Left lung (tissue), 14 donors: ENCODE measurements at regions of chr17 and their contacts with region 1.

Region 1: GRCh38 chr17:7687908-7688807 is at the start of gene WRAP53:
- DNase-seq: peak; percentile 96 to 99 (median 97)
- ATAC-seq: peak; percentile 92
- H3K4me3 ChIP-seq: peak within 1 kb of the TSS; percentile 94 to 96
- H3K27ac ChIP-seq: peak within 1 kb of the TSS; percentile 97 to 98
- H3K4me1 ChIP-seq: peaks cover 19 to 32% of the 10 kb centered on the region in 2 donors
- H3K27me3 ChIP-seq: no peaks in the 10 kb centered on the region
- CTCF ChIP-seq: peak; percentile 97 to 99
- polyA plus RNA-seq, gene WRAP53: 13.3 to 16.0 (median 14.0) TPM

Region 2: DNA sequence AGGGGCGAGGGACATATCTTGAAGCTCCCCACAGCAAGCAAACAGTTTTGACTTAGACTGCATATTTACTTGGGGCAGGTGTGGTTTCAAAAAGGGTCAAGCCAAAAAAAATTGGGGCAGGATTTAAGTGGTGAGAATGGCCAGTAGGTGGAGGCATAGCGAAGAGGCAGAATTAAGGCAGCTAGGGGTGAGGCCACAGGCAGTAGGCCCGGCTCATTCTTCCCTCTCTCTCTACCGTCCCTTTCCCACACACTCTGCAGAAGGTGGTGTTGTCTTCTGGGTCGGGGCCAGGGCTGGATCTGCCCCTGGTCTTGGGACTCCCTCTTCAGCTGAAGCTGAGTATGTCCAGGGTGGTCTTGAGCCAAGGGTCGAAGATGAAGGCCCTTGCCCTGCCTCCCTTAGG is 55.7 kb before region 1 on chr17:
- intact Hi-C with region 1: loop called in 1 of 2 experiments (anchors 10 kb)
- DNase-seq: no peak
- ATAC-seq: peak; percentile 57
- H3K4me3 ChIP-seq: no peak overlapping the region
- H3K27ac ChIP-seq: no peak overlapping the region
- H3K4me1 ChIP-seq: peaks cover 0 to 6% of the 10 kb centered on the region in 2 donors
- H3K27me3 ChIP-seq: no peaks in the 10 kb centered on the region
- CTCF ChIP-seq: peak; percentile 20 to 42

Region 3: DNA sequence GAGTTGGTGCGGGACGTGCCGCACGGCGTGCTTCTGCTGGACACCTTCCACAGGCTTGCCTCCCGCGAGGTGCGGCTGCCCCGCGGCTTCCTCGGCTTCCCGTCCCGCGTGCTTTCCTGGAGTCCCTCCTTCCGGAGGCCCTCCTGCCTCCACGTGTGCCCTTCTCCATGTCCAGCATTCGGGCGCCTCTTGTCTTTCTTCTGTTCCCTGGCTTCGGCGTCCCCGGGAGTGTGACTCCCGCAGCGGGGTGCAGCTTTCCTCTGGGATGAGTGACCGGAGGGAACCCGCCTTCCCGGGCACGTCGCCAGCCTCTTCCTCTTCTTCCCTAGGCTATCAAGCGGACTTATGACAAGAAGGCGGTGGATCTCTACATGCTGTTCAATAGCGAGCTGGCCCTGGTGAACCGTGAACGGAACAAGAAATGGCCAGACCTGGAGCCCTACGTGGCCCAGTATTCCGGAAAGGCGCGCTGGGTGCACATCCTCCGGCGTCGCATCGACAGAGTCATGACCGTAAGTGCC is 52.4 kb after region 1 on chr17:
- intact Hi-C with region 1: no loop called
- DNase-seq: no peak
- ATAC-seq: no peak
- H3K4me3 ChIP-seq: no peak overlapping the region
- H3K27ac ChIP-seq: no peak overlapping the region
- H3K4me1 ChIP-seq: peaks cover under 1 to 7% of the 10 kb centered on the region in 2 donors
- H3K27me3 ChIP-seq: peaks cover 0 to 37% of the 10 kb centered on the region in 2 donors
- CTCF ChIP-seq: no peak